PC-9 (cell line): ENCODE measurements at regions of chr16 and their contacts with region 1.

Region 1: GRCh38 chr16:87387942-87388817 is 4.0 kb upstream of the MAP1LC3B start:
- DNase-seq: peak; percentile 87 to 99
- H3K4me3 ChIP-seq: peak overlapping the region; percentile 45; the same call in 1 of the 2 replicates
- H3K27ac ChIP-seq: peak overlapping the region; percentile 83
- H3K4me1 ChIP-seq: peaks cover 34% of the 10 kb centered on the region
- H3K27me3 ChIP-seq: no peaks in the 10 kb centered on the region
- CTCF ChIP-seq: no peak

Region 2: GRCh38 chr16:87098976-87099720 is 289.0 kb before region 1 on chr16:
- CTCF ChIA-PET with region 1: no interaction called
- POLR2A ChIA-PET with region 1: no interaction called
- intact Hi-C with region 1: no loop called
- DNase-seq: no peak
- H3K4me3 ChIP-seq: no peak overlapping the region
- H3K27ac ChIP-seq: no peak overlapping the region
- H3K4me1 ChIP-seq: no peaks in the 10 kb centered on the region
- H3K27me3 ChIP-seq: peaks cover 88% of the 10 kb centered on the region
- CTCF ChIP-seq: no peak

Region 3: DNA sequence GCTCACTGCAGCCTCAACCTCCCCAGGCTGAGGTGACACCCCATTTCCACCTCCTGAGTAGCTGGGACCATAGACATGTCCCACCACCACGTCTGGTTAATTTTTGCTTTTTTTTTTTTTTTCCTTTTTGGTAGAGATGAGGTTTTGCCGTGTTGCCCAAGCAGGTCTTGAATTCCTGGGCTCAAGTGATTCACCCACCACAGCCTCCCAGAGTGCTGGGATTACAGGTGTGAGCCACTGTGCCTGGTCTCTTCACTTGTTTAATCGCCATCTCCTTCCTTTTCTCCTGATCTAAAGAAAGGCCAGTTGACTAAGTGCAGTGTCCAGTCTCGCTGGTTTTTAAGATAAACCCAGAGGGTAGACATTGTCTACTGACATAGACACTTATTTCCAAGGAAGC is 223.0 kb before region 1 on chr16:
- CTCF ChIA-PET with region 1: no interaction called
- POLR2A ChIA-PET with region 1: interaction called, 10 read pairs
- intact Hi-C with region 1: no loop called
- DNase-seq: peak in 1 of 2 experiments; percentile 41
- H3K4me3 ChIP-seq: no peak overlapping the region
- H3K27ac ChIP-seq: no peak overlapping the region
- H3K4me1 ChIP-seq: peaks cover 21% of the 10 kb centered on the region
- H3K27me3 ChIP-seq: peaks cover 12% of the 10 kb centered on the region
- CTCF ChIP-seq: no peak

Region 4: DNA sequence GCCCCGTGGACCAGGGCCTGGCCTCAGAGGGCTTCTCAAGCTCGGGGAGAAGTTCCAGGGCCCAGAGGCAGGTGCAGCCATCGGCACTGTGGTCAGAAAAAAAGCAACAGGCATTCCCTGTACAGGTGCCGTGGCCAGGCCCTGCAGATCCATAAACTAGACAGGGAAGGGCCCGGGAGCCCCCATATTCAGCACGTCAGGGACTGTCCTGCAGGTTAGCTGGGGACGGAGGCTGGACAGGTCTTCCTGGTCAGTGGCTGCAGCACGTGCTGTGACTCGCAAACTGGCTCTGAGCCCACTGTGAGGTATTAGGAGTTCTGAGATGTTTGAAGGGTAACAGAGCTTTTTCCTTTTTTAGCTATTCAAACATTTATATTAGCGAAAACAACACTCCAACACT is 56.0 kb before region 1 on chr16:
- CTCF ChIA-PET with region 1: no interaction called
- POLR2A ChIA-PET with region 1: no interaction called
- intact Hi-C with region 1: no loop called
- DNase-seq: no peak
- H3K4me3 ChIP-seq: no peak overlapping the region
- H3K27ac ChIP-seq: no peak overlapping the region
- H3K4me1 ChIP-seq: no peaks in the 10 kb centered on the region
- H3K27me3 ChIP-seq: no peaks in the 10 kb centered on the region
- CTCF ChIP-seq: no peak

Region 5: DNA sequence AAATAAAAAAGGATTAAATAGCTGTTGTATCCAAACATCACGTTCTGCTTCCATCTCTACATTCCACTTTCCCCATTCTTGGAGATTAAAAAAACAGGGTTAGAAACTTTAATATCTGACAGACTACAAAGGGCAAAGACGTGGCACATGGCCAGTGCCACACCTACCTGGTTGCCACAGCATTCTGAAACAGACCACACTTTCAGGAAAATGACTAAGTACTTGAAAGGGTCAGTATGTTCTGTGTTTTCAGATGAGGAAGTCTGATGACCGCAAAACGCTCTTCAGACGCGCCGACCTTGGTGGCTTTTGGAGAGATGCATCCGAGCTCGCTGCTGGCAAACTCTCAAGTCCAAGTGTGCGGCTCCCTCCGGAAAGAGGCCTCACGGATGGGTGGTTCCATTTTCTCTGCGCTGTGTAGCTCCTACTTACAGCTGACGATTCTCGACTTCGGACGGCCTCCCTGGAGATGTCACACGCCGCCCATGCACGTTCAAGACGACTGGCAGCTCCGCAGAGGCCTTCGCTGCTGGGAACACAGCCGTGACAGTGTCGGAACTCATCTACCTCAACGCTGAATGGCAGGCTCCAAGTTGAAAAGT is 19.4 kb after region 1 on chr16:
- CTCF ChIA-PET with region 1: no interaction called
- POLR2A ChIA-PET with region 1: no interaction called
- intact Hi-C with region 1: loop called (anchors 2 kb)
- DNase-seq: peak; percentile 83 to 84
- H3K4me3 ChIP-seq: no peak overlapping the region
- H3K27ac ChIP-seq: no peak overlapping the region
- H3K4me1 ChIP-seq: no peaks in the 10 kb centered on the region
- H3K27me3 ChIP-seq: no peaks in the 10 kb centered on the region
- CTCF ChIP-seq: no peak

Region 6: DNA sequence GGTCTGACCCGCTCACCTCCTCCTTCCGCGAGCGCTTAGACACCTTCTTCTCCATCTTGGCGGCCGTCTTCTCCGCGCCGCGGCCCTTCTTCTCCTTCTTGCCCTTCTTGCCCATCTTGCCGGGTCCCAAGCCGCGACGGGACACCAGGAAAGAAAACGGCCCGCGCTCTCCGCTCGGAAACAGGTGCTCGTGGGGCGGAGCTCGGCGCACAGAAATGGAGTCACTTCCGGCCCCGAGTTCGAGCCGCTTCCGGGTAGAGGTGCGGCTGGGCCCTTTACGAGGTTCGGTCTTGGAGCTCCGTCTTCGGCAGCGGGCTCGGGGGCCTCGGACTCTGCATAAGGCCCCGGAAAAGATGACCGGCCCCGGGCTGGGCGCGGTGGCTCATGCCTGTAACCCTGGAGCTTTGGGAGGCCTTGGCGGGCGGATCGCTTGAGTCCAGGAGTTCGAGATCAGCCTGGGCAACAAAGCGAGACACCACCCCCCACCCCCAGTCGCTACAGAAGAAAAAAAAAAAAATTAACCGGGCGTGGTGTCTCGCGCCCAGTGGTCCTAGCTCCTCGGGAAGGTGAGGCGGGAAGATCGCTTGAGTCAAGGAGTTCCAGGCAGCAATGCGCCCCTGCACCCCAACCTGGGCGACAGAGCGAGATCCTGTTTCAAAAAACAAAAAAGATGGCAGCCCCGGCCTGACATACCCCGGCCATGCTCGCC is 377.8 kb after region 1 on chr16 and contains the start of gene KLHDC4:
- CTCF ChIA-PET with region 1: no interaction called
- POLR2A ChIA-PET with region 1: no interaction called
- intact Hi-C with region 1: loop called (anchors 5 kb)
- DNase-seq: peak; percentile 78 to 82
- H3K4me3 ChIP-seq: peak within 1 kb of the TSS; percentile 90
- H3K27ac ChIP-seq: peak within 1 kb of the TSS; percentile 52
- H3K4me1 ChIP-seq: peaks cover 11% of the 10 kb centered on the region; the same call in 1 of the 2 replicates
- H3K27me3 ChIP-seq: no peaks in the 10 kb centered on the region
- CTCF ChIP-seq: no peak
- total RNA-seq, gene KLHDC4: 66.5 and 74.2 TPM in 2 replicates